Aorta (tissue), 5 donors: ENCODE measurements at regions of chr1 and their contacts with region 1.

Region 1: GRCh38 chr1:74771913-74772515 is 39.1 kb downstream of the TYW3 start:
- DNase-seq: no peak
- ATAC-seq: no peak
- H3K4me3 ChIP-seq: no peak overlapping the region
- H3K27ac ChIP-seq: no peak overlapping the region
- H3K4me1 ChIP-seq: no peaks in the 10 kb centered on the region
- H3K27me3 ChIP-seq: no peaks in the 10 kb centered on the region

Region 2: DNA sequence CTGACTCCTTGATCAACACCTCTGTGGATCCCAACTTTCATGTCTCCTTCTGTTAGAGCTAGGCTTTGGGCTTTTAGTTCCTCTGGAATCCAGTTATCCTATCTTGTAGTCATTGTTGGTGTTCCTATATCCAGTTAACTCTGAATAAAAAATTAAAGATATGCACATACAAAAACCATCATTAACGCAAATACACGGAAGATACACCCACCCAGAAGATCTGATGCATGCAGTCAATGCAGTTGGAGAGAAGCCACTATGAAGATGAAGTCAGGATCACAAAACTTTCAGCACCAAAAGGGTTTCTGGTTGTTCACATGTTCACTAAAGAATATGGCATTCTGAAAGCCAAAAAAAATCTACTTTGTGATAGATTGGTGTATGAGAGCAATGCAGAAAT is 238.5 kb after region 1 on chr1:
- intact Hi-C with region 1: no loop called
- DNase-seq: no peak
- ATAC-seq: no peak
- H3K4me3 ChIP-seq: no peak overlapping the region
- H3K27ac ChIP-seq: no peak overlapping the region
- H3K4me1 ChIP-seq: no peaks in the 10 kb centered on the region
- H3K27me3 ChIP-seq: no peaks in the 10 kb centered on the region

Region 3: DNA sequence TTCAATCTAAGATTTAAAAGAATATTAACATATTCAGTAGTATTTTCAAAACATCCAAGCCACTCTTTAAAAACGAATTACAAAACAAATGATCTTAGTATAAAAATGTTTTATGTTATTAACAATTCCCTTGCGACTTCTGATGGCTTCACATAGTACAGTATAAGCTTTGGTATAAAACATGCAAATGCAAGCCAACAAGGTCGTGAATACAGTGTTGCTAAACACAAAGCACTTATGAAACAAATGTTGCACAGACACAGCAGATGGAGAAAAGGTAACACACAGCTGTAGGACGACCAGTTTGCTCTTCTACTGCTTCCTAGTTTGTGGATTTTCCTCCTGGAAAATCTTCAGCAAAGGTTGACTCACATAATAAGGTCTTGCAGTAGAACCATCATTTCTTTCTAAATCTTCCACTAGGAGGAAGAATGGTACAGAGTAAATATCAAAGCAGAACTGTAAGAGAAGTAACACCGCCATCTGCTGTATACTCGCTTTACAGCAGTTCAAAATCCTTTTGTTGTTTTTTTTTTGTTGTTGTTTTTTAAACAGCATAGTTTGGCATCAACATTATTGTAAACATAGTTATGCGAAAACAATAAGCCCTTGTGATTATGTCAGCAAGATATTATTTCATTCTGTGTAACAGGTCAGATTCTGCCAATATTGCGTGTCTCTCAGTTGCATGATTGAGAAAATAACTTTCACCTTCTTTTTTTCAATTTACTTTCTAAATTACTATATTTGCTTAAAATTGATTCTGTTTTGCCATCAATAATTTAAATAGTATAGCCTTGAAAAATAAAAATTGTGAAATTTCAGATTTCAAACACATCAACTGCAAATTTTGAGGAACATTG is 431.6 kb after region 1 on chr1:
- intact Hi-C with region 1: loop called (anchors 5 kb)
- DNase-seq: no peak
- ATAC-seq: no peak
- H3K4me3 ChIP-seq: no peak overlapping the region
- H3K27ac ChIP-seq: no peak overlapping the region
- H3K4me1 ChIP-seq: no peaks in the 10 kb centered on the region
- H3K27me3 ChIP-seq: no peaks in the 10 kb centered on the region

Region 4: DNA sequence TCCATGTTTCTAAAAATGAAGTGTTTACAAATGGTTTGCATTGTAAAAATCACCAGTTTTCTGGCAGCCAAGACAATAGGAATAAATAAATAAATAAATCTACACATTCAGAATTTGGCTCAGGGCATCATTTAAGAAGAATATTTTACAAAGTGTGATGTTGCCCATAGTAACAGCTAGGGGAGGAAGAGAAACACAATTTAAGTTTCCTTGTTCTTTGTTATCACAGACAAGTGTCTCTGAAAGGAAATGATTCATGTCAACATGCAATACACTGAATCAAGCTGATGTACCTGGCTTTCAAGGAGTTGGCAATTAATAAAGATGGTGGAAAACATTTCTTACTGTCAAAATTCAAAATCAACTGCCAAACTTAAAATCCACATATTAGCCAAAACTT is 436.8 kb after region 1 on chr1:
- intact Hi-C with region 1: loop called (anchors 5 kb)
- DNase-seq: no peak
- ATAC-seq: no peak
- H3K4me3 ChIP-seq: no peak overlapping the region
- H3K27ac ChIP-seq: no peak overlapping the region
- H3K4me1 ChIP-seq: no peaks in the 10 kb centered on the region
- H3K27me3 ChIP-seq: no peaks in the 10 kb centered on the region